Posterior cingulate gyrus (tissue), 11 donors: ENCODE measurements at regions of chr4 and their contacts with region 1.

Region 1: GRCh38 chr4:86924811-86925210 is 10.0 kb upstream of the AFF1 start:
- DNase-seq: no peak

Region 2: DNA sequence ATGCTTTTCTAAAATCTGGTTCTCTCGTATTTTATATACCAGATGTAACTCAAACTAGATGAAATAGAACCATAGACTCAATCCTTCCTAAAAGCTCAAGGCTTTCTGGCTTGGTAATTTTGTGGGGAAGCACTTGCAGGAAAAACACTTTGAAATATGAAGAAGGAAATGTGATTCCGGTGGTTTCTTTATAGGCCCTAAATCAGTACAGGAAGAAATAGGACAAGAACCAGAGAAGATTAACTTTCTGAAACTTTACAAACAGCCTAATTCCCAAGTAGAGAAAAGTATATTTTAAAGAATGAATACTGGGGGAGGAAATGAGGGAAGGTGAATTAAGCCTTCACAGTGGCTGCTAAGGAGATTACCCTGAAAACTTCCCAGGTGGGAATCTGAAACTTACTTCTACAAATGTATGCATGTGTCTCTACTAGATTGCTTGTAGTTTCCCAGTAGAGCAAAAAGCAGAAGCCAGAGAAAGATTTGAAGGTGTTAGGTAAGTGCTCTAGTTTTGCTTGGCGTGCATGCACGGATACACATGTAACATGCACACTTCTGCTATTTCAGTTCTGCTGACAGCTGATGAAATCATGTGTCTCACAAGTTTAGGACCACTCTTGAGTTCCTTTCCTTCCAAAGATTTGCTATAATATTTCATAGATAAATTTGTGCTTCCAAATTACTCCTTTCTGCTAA is 102.1 kb after region 1 on chr4:
- intact Hi-C with region 1: no loop called
- DNase-seq: no peak

Region 3: GRCh38 chr4:87093443-87094123 is 168.8 kb after region 1 on chr4:
- intact Hi-C with region 1: loop called (anchors 2 kb)
- DNase-seq: peak in 3 of 10 donors; percentile 41 to 48 (median 42)

Region 4: GRCh38 chr4:87235020-87235671 is 310.3 kb after region 1 on chr4:
- intact Hi-C with region 1: loop called (anchors 5 kb)
- DNase-seq: no peak